Gastrocnemius medialis (tissue), 4 donors: ENCODE measurements at regions of chr6 and their contacts with region 1.

Region 1: DNA sequence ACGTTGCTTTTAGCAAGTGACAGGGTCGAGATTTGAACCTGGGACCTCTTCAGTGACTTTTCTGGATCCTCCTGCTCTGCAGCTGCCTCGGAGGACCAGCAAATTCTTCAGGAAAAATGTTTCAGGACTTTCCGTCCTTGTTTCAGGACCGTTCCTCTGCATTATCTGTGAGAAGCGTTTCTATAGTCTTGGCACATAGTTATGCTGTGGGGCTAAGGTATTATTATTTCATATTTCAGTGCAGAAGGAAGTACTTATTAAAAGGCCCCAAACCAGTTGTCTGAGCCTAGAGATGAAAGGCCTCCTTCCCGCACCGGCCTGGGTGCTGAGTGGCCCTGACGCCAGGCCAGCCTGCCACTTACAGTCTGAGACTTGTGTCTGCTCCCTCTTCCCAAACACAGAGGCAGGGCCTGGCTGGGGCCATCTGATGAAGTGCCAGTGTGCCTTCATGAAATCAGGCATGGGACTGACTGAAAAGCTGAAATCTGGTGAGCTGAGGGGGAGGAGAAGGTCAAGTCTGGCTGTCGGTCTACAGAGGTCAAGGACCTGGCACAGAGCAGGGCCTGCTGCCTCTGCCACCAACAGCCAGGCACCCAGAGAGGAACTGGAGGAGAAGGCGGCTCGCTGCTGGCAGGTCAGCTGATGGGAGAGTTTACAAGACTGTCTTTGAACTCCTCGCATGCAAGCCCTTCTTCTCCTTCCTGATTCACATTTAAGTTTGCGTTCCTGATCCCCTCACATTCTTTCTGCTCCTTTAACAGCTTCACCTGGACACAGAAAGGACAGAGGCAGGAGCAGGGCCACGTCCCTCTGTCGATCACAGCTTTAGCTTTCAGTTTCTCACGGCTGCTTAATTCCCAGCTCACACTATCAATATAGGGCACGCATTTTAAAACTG is 8.9 kb upstream of the QKI start:
- DNase-seq: peak; percentile 68 to 86
- ATAC-seq: peak; percentile 83 to 90
- H3K4me3 ChIP-seq: peak overlapping the region; percentile 45 to 55 (median 50)
- H3K27ac ChIP-seq: peak overlapping the region; percentile 85 to 92 (median 88)
- H3K4me1 ChIP-seq: peaks cover 23 to 27% of the 10 kb centered on the region in 2 donors
- H3K27me3 ChIP-seq: no peaks in the 10 kb centered on the region
- CTCF ChIP-seq: no peak
- POLR2A ChIP-seq: peak; percentile 26 to 37

Region 2: DNA sequence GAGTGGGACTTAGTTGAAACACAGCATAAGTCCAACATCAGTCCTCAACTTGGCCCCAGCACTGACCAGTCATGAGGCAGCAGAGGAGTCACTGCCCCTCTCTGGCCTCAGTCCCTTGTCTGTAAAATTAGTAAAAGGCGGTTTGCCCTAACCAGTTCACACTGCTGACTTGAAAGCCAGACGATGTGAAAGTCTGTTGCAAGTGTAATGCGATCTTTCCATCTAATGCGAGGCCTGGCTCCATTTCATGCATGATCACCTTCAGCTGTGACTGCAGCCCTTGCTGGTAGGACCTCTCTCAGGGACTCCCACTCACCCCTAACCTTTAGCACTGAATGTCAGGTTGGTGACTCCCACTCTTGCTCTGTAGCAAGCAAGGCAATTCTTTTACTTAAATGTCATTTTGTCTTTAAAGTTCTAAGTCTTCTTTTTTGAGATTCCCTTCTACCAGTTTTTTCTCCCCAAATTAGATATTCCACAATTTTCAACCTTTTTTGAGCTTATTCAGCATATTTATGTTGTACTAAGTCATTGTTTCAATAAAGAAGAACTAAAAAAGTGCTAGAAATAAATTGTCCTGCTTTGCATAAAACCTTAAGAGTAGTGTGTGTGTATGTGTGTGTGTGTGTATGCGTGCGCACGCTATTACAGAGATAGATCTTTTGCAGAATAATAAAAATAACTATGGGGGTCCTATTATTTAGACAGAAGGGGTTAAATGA is 432.3 kb before region 1 on chr6:
- in situ Hi-C with region 1: no loop called
- intact Hi-C with region 1: loop called (anchors 10 kb)
- DNase-seq: peak; percentile 61 to 84
- ATAC-seq: peak; percentile 94 to 97
- H3K4me3 ChIP-seq: peak overlapping the region in 2 of 4 donors; percentile 9 to 19
- H3K27ac ChIP-seq: peak overlapping the region; percentile 63 to 83 (median 68)
- H3K4me1 ChIP-seq: peaks cover 24 to 33% of the 10 kb centered on the region in 2 donors
- H3K27me3 ChIP-seq: no peaks in the 10 kb centered on the region
- CTCF ChIP-seq: no peak
- POLR2A ChIP-seq: no peak

Region 3: GRCh38 chr6:163260111-163260895 is 145.4 kb before region 1 on chr6:
- in situ Hi-C with region 1: no loop called
- intact Hi-C with region 1: loop called (anchors 10 kb)
- DNase-seq: no peak
- ATAC-seq: no peak
- H3K4me3 ChIP-seq: peak overlapping the region; percentile 32 to 41 (median 37)
- H3K27ac ChIP-seq: peak overlapping the region in 2 of 4 donors; percentile 10 to 22
- H3K4me1 ChIP-seq: peaks cover 23 to 27% of the 10 kb centered on the region in 2 donors
- H3K27me3 ChIP-seq: no peaks in the 10 kb centered on the region
- CTCF ChIP-seq: no peak
- POLR2A ChIP-seq: no peak

Region 4: DNA sequence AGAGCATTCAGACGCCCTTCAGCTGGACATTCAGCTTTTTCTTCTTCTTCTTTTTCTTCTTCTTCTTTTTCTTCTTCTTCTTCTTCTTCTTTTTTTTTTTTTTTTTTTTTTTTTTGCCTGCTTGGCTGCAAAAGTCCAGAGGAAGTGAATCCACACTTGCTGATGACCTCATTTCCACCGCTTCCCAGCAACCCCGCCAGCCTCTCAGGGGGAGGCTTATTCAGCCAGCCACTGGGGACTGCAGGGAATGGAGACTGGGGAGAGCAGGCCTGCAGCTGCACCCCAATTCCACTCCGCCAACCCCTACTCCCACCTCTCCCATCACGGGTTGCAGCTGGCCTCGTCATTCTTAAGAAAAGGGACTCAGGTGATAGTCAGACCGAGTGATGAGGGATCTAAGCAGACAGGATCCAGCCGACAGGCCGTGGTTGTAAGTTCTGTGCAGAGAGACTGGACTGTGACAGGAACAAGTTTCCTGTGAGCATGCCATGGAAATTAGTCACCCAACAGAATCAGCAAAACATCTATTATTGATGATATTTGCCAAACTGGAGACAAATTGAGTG is 50.2 kb before region 1 on chr6:
- in situ Hi-C with region 1: loop called in 1 of 4 experiments (anchors 10 kb)
- intact Hi-C with region 1: no loop called
- DNase-seq: no peak
- ATAC-seq: peak in 1 of 2 donors; percentile 35
- H3K4me3 ChIP-seq: peak overlapping the region in 1 of 4 donors; percentile 36
- H3K27ac ChIP-seq: peak overlapping the region; percentile 36 to 56 (median 52)
- H3K4me1 ChIP-seq: peaks cover 9 to 13% of the 10 kb centered on the region in 2 donors
- H3K27me3 ChIP-seq: no peaks in the 10 kb centered on the region
- CTCF ChIP-seq: no peak
- POLR2A ChIP-seq: no peak